ENCODE measurements at regions of chr22 and their contacts with region 1.

Region 1: GRCh38 chr22:29727131-29727523 is 7.3 kb downstream of the CABP7 start:
- DNase-seq: peak in 1 of 2 experiments; percentile 79
- H3K4me3 ChIP-seq: no peak overlapping the region
- H3K27ac ChIP-seq: no peak overlapping the region
- H3K4me1 ChIP-seq: peaks cover 0 to 6% (median 4%) of the 10 kb centered on the region in 4 experiments; a peak in 6 of 7 replicates
- H3K27me3 ChIP-seq: peaks cover 0 to 9% (median 3%) of the 10 kb centered on the region in 4 experiments; a peak in 4 of 7 replicates
- CTCF ChIP-seq: peak; percentile 42 to 62 (median 45)
- EP300 ChIP-seq: no peak
- POLR2A ChIP-seq: no peak
- RAD21 ChIP-seq: peak; percentile 55 to 63

Region 2: DNA sequence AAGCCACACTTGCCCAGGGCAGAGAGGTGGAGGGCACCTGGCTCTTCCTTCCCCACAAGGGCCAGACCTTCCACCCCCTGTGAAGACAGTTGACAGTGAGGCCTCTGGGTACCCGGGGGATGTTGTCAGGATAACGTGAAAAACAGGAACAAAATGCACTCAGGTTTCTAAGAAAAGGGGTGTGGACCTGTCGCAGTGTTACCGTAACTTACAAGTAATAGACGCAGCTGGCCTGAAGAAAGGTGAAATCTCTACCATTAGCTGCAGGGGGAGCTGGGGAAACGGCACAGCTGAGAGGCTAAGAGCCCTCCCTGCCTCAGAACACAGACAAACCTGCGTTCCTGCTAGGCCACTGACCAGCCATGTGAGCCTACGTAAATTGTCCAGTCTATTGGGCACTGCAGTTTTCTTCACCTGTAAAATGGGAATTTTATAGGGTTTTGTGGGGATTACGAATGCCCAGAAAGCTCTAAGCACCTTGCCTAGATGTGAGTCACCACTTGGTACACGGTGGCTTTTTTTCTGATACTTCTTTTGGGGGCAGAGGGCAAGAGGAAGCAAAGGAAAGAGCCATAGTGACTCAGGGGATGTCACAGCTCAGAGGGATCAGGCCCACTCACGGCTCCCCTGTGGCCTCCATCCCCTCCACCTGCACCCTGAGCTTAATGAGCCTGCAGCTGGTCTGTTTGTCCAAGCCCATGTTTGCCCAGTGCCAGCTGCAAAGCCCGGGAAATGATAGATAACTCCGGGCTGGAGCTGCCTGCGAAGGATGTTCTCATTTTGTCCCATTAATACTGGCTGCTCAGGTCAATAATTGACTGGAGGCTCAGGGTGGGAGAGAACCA is 25.8 kb before region 1 on chr22:
- CTCF ChIA-PET with region 1: interaction called, 22 read pairs
- POLR2A ChIA-PET with region 1: interaction called, 3 read pairs
- DNase-seq: no peak
- H3K4me3 ChIP-seq: no peak overlapping the region
- H3K27ac ChIP-seq: no peak overlapping the region
- H3K4me1 ChIP-seq: peaks cover 9 to 53% (median 45%) of the 10 kb centered on the region in 4 experiments
- H3K27me3 ChIP-seq: peaks cover 0 to 30% (median 12%) of the 10 kb centered on the region in 4 experiments; a peak in 3 of 7 replicates
- CTCF ChIP-seq: peak; percentile 43 to 68 (median 54)
- EP300 ChIP-seq: no peak
- POLR2A ChIP-seq: no peak
- RAD21 ChIP-seq: peak; percentile 59 to 68

Region 3: DNA sequence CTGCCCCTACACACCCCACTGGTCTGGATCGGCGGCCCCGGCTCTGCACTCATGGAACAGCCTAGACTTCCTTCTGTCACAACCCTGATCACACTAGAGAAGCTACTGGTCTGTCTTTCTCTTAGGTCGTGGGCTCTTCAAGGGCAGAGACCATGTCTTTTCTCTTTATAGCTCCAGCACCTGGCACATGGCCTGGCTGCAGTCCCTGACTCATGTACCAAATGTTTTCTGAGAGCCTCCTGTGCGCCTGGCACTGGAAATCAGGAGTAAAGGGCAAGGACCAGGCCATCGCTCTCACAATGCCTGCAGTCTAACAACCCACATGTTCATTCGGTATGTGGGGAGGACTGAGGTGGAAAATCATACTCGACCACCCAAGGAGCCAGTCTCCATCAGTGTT is 103.5 kb after region 1 on chr22:
- CTCF ChIA-PET with region 1: no interaction called
- POLR2A ChIA-PET with region 1: no interaction called
- DNase-seq: no peak
- H3K4me3 ChIP-seq: no peak overlapping the region
- H3K27ac ChIP-seq: no peak overlapping the region
- H3K4me1 ChIP-seq: no peaks in the 10 kb centered on the region
- H3K27me3 ChIP-seq: no peaks in the 10 kb centered on the region
- CTCF ChIP-seq: no peak
- EP300 ChIP-seq: no peak
- POLR2A ChIP-seq: no peak
- RAD21 ChIP-seq: no peak